ENCODE measurements at regions of chr2 and their contacts with region 1.

Region 1: GRCh38 chr2:70418514-70418913 is 116.6 kb upstream of the FAM136A start:
- DNase-seq: no peak
- H3K4me3 ChIP-seq: no peak overlapping the region
- CTCF ChIP-seq: no peak

Region 2: DNA sequence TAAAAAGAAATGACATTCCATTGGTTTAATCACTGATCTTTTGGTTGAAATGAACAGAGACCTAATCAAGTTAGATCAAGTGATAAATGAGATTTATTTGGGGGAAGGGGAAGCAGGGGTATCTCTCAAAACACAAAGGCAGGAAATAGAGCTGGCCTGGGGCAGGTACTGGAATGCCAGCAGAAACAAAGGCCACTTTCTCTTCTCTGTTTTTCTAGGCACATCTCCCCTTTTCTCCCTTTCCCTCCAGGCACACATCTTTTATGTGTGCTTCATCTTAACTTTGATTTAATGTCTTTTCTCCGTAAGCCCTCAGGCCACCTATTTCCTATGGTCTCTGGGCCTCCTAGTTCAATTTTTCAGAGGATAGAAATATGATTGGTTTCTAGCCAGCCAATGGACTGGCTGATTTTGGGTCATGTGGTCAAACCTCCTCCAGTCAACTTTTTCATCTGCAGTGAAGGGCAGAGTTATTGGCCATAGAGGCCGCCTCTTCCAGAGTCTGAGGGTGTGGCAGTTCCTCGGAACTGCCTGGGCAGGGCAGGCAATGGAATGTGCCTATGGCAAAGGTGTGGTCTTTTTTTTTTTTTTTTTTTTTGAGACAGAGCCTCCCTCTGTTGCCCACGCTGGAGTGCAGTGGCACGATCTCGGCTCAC is 57.7 kb before region 1 on chr2:
- in situ Hi-C with region 1: loop called (anchors 5 kb)
- DNase-seq: no peak
- H3K4me3 ChIP-seq: no peak overlapping the region
- CTCF ChIP-seq: no peak

Measured in astrocyte of the cerebellum (primary cell).